ENCODE measurements at regions of chr5 and their contacts with region 1.

Region 1: DNA sequence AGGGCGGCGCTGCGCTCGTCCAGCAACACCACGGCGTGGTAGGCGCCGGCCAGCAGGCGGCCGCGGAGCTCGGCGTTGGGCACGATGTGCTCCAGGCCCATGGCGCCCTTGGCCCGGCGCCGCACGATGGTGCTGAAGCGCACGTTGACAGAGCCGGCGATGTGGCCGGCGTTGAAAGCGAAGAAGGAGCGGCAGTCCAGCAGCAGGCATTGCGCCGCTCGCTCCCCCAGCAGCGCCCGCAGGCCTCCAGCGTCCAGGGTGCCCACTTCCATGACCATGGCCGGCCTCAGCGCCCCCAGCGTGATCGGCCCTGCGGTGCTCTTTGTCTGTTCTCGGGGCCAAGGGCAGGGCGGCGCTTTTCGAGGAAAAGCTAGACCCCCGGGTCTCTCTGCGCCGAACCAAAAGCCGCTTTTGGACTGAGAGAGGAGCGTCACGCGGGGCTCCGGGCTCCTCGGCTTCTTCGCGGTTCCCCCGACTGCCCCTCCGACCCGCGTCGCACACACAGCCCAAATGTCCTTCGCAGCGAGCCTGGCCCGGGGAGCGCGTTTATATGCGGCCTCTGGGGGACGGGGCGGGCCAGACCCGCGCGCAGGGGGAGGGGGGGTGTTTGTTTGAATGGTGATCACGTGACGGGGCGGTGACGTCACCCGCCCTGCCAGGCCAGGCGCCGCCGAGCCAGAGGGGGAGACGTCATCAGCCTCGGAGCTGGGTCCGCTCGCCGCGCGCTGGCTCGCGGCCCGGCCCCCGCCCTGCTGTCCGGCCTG is at the start of gene DUSP1:
- DNase-seq: peak; percentile 79
- H3K4me3 ChIP-seq: peak within 1 kb of the TSS; percentile 82
- CTCF ChIP-seq: peak; percentile 69

Region 2: DNA sequence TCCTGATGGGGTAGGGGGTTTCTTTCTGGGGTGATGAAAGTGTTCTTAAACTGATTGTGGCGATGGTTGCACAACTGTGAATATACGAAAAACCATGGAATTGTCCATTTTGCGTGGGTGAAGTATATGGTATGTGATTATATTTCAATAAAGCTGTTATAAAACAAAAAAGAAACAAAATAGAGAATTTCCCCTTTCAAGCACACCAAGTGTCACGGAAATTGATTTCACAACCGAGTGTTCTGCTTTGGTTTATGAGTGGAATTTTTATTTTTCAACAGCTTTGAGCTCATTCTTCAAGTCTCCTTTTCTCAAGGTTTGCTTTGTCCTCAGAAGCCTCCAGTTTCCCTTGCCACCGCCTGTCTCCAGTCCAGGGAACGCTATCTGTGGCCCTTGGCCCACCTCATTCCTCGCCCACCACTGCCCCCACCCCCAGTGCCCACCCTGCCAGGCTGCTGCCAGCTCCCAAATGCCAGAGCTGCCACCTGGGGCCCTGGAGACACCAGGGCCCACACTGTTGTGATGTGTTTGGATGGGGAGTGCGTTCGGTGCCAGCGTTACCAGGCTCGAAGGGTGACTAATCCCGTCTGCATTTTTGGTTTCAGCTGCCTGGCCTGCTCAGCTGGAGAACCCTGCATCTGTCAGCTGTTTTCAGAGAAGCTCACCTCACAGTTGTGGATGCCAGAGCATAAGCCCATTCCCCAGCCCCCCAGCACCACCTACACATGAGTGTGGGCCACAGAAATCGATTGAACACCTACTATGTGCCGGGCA is 30.2 kb before region 1 on chr5:
- CTCF ChIA-PET with region 1: no interaction called
- POLR2A ChIA-PET with region 1: interaction called, 16 read pairs
- DNase-seq: peak; percentile 72
- H3K4me3 ChIP-seq: no peak overlapping the region
- CTCF ChIP-seq: no peak

Region 3: GRCh38 chr5:172795318-172795977 is 24.6 kb after region 1 on chr5:
- CTCF ChIA-PET with region 1: interaction called, 14 read pairs
- POLR2A ChIA-PET with region 1: interaction called, 129 read pairs
- DNase-seq: no peak
- H3K4me3 ChIP-seq: no peak overlapping the region
- CTCF ChIP-seq: no peak

Region 4: GRCh38 chr5:172868924-172869591 is 98.2 kb after region 1 on chr5:
- CTCF ChIA-PET with region 1: interaction called, 12 read pairs
- POLR2A ChIA-PET with region 1: interaction called, 136 read pairs
- DNase-seq: peak; percentile 72
- H3K4me3 ChIP-seq: no peak overlapping the region
- CTCF ChIP-seq: peak; percentile 58

Region 5: GRCh38 chr5:172902497-172903200 is 131.8 kb after region 1 on chr5:
- CTCF ChIA-PET with region 1: interaction called, 17 read pairs
- POLR2A ChIA-PET with region 1: interaction called, 117 read pairs
- DNase-seq: peak; percentile 99
- H3K4me3 ChIP-seq: no peak overlapping the region
- CTCF ChIP-seq: peak; percentile 86

Region 6: GRCh38 chr5:172939071-172939470 is 168.2 kb after region 1 on chr5:
- CTCF ChIA-PET with region 1: interaction called, 4 read pairs
- POLR2A ChIA-PET with region 1: interaction called, 149 read pairs
- DNase-seq: no peak
- H3K4me3 ChIP-seq: no peak overlapping the region
- CTCF ChIP-seq: peak; percentile 58